ENCODE measurements at regions of chr3 and their contacts with region 1.

Region 1: DNA sequence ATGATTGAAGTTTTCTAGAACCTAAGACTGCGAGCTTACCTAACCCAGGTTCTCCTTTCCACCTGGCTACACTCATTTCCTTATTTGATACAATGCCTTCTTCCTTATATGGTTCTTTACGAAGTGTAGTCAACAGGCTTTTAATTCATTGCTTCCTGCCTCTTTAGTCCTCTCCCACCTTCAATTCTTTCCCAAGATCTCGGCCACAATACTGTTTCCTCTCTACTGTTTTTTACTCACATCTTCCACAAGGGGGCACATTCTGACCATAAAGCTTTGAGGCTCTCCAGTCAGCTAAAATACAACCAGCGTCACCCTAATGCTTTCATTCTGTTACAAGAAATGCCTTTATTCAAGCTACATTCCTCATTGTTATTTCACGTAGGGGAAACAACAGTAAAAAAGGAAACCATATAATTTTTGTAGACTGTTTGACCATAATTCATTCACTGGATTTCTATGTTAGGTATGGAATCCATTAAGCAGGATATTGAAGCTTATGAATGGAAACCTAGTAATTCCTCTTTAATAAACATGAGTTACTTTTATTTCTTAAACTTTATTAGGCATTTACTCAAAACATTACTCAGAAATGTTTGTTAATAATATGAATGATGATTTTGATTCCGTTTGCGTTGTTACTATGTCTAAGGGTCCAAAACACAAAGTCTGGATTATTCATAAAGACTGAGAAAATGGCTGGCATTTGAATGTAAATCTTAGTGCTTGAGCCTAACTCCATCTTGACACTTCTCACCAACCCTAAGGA is 29.5 kb upstream of the VEPH1 start:
- DNase-seq: peak; percentile 71
- H3K4me3 ChIP-seq: peak overlapping the region; percentile 44
- CTCF ChIP-seq: peak; percentile 59

Region 2: DNA sequence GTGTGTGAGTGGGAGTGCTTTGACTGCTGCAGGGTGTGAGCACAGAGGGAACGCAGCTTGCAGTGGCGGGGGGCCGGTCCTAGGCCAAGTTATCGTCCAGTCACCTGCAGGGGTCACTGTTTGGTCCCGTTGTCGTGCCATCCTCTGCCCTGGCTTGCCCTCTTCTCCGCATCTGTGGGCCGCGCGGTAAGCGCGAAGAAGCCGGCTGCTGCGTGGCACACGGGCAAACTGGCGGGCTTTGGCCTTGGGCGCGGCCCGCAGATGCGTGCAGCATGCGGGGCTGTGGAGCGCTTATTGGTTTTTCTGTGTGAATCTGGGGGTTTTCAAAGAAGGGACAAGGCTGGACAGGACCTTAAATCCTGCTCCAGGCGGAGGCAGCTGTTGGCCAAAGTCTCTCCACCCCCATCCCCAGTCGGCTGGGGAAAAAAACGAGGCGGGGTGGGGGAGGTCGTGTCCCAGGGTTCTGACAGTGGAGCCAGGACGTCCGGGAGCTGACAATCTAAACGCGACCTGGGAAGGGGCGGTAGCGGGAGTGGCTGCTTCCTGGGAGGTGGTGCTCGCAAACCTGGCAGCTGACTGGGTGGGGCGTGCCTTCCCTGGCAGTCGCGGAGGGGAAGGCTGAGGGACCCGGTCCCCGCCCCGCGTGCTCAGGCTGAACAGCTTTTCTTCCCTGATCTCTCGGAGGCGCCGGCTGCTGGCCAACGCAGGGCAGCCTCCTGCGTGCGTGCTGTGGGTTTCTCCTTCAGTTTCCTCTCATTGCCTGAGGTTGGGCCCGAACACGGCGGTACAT is 10.2 kb after region 1 on chr3:
- CTCF ChIA-PET with region 1: interaction called, 111 read pairs
- POLR2A ChIA-PET with region 1: interaction called, 6 read pairs
- DNase-seq: no peak
- H3K4me3 ChIP-seq: peak overlapping the region; percentile 58
- CTCF ChIP-seq: peak; percentile 55

Region 3: GRCh38 chr3:157618075-157618760 is 85.5 kb after region 1 on chr3:
- CTCF ChIA-PET with region 1: interaction called, 11 read pairs
- POLR2A ChIA-PET with region 1: no interaction called
- DNase-seq: peak; percentile 46
- H3K4me3 ChIP-seq: no peak overlapping the region
- CTCF ChIP-seq: peak; percentile 18

Region 4: GRCh38 chr3:157669416-157669815 is 136.7 kb after region 1 on chr3:
- CTCF ChIA-PET with region 1: no interaction called
- POLR2A ChIA-PET with region 1: no interaction called
- DNase-seq: no peak
- H3K4me3 ChIP-seq: no peak overlapping the region
- CTCF ChIP-seq: no peak